Activated T-helper 1 cell treated with anti-CD3 and anti-CD28 coated beads, Interleukin-12 subunit alpha, Interleukin-12 subunit beta, Interleukin-2, Interleukin-4 antibody, amounts not matched to agents 30 ng/mL and 10 ng/mL and 1 ng/mL, durations not matched to agents 14 hours and 24 hours and 36 hours (primary cell): ENCODE measurements at regions of chr18 and their contacts with region 1.

Region 1: GRCh38 chr18:74495581-74496507 is at the start of gene CNDP2:
- DNase-seq: peak; percentile 99
- H3K4me3 Mint-ChIP-seq: peak within 1 kb of the TSS; percentile 88
- H3K27ac Mint-ChIP-seq: peak within 1 kb of the TSS; percentile 98
- H3K4me1 Mint-ChIP-seq: peaks cover 49% of the 10 kb centered on the region
- H3K27me3 Mint-ChIP-seq: peaks cover 9% of the 10 kb centered on the region
- total RNA-seq, gene CNDP2: 159 and 164 TPM in 2 replicates

Region 2: DNA sequence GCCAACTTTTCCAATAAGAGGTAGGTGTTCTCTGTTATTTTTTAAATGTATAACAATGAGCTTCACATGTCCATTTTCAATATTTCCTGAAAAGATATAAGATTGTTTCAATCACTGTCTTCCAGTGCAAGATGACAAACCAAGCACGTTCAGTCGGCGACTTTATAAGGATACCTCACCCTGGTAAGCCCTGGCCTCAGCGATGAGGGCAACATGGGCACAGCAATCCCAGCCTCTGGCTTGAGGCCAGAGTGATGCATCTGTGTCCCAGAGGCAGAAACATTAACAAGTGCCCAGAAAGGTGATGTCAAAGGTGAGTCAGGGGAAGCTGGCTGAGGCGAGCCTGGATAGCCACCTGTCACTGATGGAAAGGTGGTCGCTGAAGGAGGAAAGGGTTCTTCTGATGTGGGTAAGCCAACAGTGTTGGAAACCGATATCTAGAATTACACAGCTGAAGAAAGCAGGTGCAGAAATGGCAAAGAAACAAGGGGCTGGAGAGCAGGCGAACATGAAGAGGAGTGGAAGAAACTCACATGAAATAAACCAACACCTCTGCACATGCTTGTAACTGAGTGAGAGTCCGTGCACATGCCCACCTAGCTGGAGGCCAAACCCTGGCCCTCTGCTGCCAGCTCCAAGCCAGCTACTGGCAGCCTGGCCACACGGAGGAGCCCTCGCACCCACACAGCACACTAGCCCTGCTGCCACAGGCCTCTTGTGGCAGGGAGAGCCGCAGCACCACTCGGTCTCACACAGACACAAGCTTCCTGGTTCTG is 413.7 kb before region 1 on chr18:
- intact Hi-C with region 1: loop called (anchors 2 kb)
- DNase-seq: peak; percentile 63
- H3K4me3 Mint-ChIP-seq: peak overlapping the region; percentile 85
- H3K27ac Mint-ChIP-seq: peak overlapping the region; percentile 97
- H3K4me1 Mint-ChIP-seq: peaks cover 24% of the 10 kb centered on the region
- H3K27me3 Mint-ChIP-seq: peaks cover 5% of the 10 kb centered on the region

Region 3: GRCh38 chr18:74196220-74197119 is 299.4 kb before region 1 on chr18:
- intact Hi-C with region 1: loop called (anchors 1 kb)
- DNase-seq: peak; percentile 17
- H3K4me3 Mint-ChIP-seq: peak overlapping the region; percentile 68
- H3K27ac Mint-ChIP-seq: no peak overlapping the region
- H3K4me1 Mint-ChIP-seq: peaks cover 7% of the 10 kb centered on the region
- H3K27me3 Mint-ChIP-seq: peaks cover 5% of the 10 kb centered on the region

Region 4: DNA sequence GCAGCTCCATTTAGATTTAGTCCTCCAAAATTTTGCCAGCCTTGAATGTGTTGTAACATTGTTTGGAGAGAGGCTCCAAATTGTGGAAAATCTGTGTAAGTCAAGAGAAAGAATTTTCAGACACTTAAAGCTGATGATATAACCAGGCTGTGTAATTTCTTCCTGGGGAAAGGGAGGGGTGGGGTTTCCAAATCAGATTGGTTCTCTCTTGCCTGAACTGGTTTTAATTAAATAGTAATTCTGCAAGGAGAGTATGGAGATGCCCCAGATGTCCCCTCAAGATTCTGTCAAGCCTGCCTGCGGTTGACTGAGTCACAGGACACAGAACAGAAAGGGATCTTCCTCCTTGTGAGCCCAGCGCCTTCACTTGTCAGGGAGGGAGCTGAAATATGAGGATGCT is 125.7 kb before region 1 on chr18:
- intact Hi-C with region 1: loop called (anchors 5 kb)
- DNase-seq: no peak
- H3K4me3 Mint-ChIP-seq: no peak overlapping the region
- H3K27ac Mint-ChIP-seq: no peak overlapping the region
- H3K4me1 Mint-ChIP-seq: peaks cover 31% of the 10 kb centered on the region
- H3K27me3 Mint-ChIP-seq: peaks cover 20% of the 10 kb centered on the region

Region 5: DNA sequence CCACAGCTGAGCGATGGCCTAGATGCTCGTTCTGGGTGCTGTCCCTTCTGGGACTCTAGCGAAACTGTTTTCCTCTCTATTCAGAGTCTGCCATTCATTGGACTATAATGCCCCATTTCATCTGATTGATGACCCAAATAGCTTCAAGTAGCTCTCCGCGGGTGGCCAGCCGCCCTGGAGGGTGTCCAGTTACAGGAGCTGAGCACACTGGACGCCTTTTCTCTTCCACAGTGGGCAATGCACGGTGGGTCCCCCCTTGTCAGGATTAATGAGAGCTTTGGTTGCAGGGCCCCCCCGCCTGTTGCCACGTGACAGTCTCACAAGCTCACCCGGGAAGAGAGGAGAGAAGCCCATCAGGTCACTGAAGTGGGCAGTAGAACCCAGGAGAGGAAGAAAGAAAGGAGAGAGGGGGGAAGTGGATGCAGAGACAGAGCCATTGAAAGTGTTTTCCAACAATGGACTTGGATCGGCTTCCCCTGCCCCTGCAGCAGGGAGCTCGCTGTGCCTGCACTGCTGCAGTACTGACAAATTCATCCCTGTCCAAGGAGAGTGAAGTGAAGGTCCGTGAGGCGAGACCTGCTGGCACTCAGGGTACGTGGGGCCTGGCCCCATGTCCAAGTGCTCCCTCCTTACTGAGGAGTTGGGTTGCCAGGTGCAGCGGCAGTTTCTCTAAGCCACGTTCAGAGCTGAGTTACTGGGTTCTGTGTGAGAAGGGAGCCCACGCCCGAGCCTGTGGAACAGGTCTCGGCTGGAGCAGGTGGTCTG is 83.5 kb before region 1 on chr18:
- intact Hi-C with region 1: no loop called
- DNase-seq: no peak
- H3K4me3 Mint-ChIP-seq: no peak overlapping the region
- H3K27ac Mint-ChIP-seq: no peak overlapping the region
- H3K4me1 Mint-ChIP-seq: peaks cover 26% of the 10 kb centered on the region
- H3K27me3 Mint-ChIP-seq: peaks cover 7% of the 10 kb centered on the region

Region 6: DNA sequence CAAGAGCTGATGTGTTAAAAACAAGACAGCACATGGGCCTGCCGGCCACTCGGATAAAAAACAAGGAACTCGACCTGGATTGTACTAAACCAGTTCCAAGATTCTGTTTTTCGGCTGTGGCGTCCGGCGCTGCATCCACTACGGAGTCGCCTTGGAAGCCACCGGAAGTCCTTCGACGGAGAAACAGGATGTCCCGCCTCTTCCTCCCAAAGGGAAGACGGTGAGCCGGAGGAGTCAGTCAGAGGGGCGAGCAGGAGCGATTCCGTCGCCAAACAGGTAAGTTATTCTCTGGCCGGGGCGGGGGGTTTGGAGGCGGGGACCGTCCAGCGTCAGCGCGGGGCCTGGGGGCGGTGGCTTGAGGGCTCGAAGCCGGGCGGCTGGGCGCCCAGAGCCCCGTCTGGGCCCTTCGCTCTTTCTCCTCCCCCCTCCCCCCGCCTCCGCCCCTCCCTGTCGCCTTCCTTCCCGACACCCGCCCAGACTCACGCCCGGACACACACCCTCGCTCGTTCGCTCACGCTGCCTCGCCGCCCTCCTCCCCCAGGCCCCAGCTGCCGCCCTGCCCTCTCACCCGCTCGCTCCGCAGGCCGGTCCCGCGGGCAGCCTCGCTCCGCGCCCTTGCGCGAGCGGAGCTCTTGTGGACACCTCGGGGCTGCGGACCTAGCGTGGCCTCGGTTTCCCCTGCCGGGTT is 102.0 kb after region 1 on chr18 and contains the start of gene ZNF407:
- intact Hi-C with region 1: loop called (anchors 1 kb)
- DNase-seq: peak; percentile 83
- H3K4me3 Mint-ChIP-seq: peak within 1 kb of the TSS; percentile 97
- H3K27ac Mint-ChIP-seq: peak within 1 kb of the TSS; percentile 96
- H3K4me1 Mint-ChIP-seq: peaks cover 45% of the 10 kb centered on the region
- H3K27me3 Mint-ChIP-seq: no peaks in the 10 kb centered on the region
- total RNA-seq, gene ZNF407: 19.8 and 21.4 TPM in 2 replicates

Region 7: GRCh38 chr18:76492669-76493212 is 1996.9 kb after region 1 on chr18:
- intact Hi-C with region 1: loop called (anchors 5 kb)
- DNase-seq: peak; percentile 97
- H3K4me3 Mint-ChIP-seq: peak overlapping the region; percentile 96
- H3K27ac Mint-ChIP-seq: peak overlapping the region; percentile 81
- H3K4me1 Mint-ChIP-seq: peaks cover 37% of the 10 kb centered on the region
- H3K27me3 Mint-ChIP-seq: peaks cover 75% of the 10 kb centered on the region